ENCODE measurements at regions of chrX and their contacts with region 1.

Region 1: DNA sequence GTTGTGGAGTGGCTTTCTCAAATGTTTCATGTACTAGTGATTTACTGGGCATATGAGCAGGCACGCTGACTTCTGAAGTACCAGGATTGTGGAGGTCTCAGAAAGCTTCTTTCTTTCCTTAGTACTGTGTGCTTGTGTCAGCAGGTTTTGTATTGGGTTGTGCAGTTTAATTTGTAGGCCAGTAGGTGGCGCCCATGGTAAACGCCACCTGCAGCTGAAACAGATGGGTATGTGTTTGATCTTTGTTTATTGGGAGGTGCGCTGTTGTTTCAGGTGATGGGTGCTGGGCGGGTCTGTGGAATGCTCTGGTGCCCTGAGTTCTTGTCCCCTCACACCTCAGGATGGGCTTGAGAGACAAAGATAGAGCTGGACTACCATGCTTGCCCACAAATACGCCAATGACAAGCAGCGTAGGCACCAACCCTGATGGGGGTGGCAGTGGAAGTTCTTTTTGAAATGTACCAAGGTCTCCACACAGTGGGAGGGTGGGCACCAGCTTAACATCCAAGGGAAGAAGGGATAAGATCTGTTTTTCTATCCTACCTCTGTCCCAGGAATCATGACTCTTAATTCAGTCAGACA is 141.5 kb downstream of the RPS6KA6 start:
- DNase-seq: peak; percentile 1 to 53
- ATAC-seq: peak; percentile 50 to 88; a peak in 5 of 6 replicates
- H3K4me3 ChIP-seq: no peak overlapping the region
- H3K27ac ChIP-seq: no peak overlapping the region
- H3K4me1 ChIP-seq: no peaks in the 10 kb centered on the region
- CTCF ChIP-seq: peak; percentile 62
- EP300 ChIP-seq: no peak
- POLR2A ChIP-seq: no peak
- RAD21 ChIP-seq: peak; percentile 58 to 71

Region 2: DNA sequence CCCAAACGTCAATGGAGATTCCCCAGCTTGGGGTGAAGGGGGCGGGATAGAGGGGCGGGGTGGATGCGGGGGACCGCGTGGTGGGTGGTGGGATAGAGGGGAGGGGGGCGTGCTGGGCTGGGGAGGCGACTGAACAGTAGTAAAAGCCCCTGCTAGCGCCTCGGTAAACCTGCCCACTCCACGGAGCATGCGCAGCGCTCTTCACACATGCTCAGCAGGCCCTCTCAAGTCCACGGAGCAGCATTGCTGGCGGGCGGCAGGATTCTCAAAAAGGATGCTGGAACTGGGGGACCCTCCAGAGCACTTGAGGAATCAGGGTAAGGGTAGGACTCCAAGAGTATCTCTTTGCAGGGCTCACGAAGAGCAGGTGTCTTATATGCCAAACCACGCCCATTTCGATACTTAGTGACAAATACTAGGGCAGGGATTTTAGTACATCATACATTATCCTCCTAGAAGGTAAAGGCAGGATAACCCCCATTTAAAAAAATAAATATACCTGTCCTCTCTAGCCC is 141.9 kb after region 1 on chrX:
- CTCF ChIA-PET with region 1: interaction called, 12 read pairs
- POLR2A ChIA-PET with region 1: no interaction called
- DNase-seq: peak; percentile 48 to 79
- ATAC-seq: peak; percentile 87 to 91
- H3K4me3 ChIP-seq: peak overlapping the region; percentile 86
- H3K27ac ChIP-seq: peak overlapping the region; percentile 77 to 87
- H3K4me1 ChIP-seq: peaks cover 7% of the 10 kb centered on the region; the same call in 2 of the 3 replicates
- CTCF ChIP-seq: no peak
- EP300 ChIP-seq: no peak
- POLR2A ChIP-seq: peak; percentile 27; the same call in 1 of the 2 replicates
- RAD21 ChIP-seq: no peak

Measured in A549 (cell line).